Activated CD4-positive, alpha-beta memory T cell treated with anti-CD3 and anti-CD28 coated beads, Interleukin-2, amount 10 ng/mL, durations not matched to agents 7 days and 5 days (primary cell): ENCODE measurements at regions of chr1 and their contacts with region 1.

Region 1: DNA sequence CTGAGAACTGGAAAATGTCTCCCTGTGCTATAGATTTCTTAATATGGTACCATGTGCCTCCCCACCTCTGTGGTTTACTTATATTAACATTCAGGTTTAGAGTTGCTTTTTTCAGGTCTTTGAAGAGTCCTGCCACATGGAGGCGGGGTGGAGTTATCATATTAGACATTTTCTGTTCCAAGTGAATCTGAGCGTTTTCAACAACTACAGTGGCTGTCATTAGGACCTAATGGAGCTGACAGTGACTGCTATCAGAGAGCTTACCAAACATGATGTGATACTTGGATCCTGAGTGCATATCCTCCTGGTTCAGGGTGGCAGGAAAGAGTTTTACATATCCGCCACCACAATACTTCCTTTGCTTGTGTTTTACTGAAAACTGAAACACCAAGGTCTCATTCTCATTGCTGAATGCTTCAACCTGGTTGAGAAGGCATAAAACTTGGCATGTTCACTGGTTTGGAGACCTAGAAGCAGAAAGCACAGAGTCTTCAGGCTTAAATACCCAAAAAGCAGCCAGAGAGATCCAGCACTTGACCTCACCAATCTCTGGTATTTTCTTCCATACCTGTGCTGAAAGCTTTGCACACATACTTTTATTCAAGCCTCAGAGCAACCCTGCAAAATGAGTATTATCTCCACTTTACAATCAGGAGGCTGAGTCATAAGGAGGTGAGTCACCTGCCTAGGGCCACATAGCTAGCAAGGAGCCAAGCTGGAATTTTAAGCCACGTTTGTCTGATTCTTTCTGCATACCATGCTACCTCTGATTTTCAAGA is 47.4 kb upstream of the OSBPL9 start:
- DNase-seq: peak; percentile 45
- H3K4me3 Mint-ChIP-seq: peak overlapping the region; percentile 21
- H3K27ac Mint-ChIP-seq: peak overlapping the region; percentile 92
- H3K4me1 Mint-ChIP-seq: peaks cover 42% of the 10 kb centered on the region
- H3K27me3 Mint-ChIP-seq: no peaks in the 10 kb centered on the region

Region 2: GRCh38 chr1:51491166-51491981 is 78.1 kb before region 1 on chr1:
- CTCF ChIA-PET with region 1: no interaction called
- POLR2A ChIA-PET with region 1: no interaction called
- DNase-seq: no peak
- H3K4me3 Mint-ChIP-seq: no peak overlapping the region
- H3K27ac Mint-ChIP-seq: peak overlapping the region; percentile 6
- H3K4me1 Mint-ChIP-seq: peaks cover 28% of the 10 kb centered on the region
- H3K27me3 Mint-ChIP-seq: no peaks in the 10 kb centered on the region

Region 3: GRCh38 chr1:51519048-51519864 is 50.2 kb before region 1 on chr1 and contains the start of gene EPS15:
- CTCF ChIA-PET with region 1: no interaction called
- POLR2A ChIA-PET with region 1: interaction called, 14 read pairs
- DNase-seq: peak; percentile 89
- H3K4me3 Mint-ChIP-seq: peak within 1 kb of the TSS; percentile 86
- H3K27ac Mint-ChIP-seq: peak within 1 kb of the TSS; percentile 86
- H3K4me1 Mint-ChIP-seq: peaks cover 54% of the 10 kb centered on the region
- H3K27me3 Mint-ChIP-seq: no peaks in the 10 kb centered on the region
- total RNA-seq, gene EPS15: 71.8 to 75.0 TPM

Region 4: DNA sequence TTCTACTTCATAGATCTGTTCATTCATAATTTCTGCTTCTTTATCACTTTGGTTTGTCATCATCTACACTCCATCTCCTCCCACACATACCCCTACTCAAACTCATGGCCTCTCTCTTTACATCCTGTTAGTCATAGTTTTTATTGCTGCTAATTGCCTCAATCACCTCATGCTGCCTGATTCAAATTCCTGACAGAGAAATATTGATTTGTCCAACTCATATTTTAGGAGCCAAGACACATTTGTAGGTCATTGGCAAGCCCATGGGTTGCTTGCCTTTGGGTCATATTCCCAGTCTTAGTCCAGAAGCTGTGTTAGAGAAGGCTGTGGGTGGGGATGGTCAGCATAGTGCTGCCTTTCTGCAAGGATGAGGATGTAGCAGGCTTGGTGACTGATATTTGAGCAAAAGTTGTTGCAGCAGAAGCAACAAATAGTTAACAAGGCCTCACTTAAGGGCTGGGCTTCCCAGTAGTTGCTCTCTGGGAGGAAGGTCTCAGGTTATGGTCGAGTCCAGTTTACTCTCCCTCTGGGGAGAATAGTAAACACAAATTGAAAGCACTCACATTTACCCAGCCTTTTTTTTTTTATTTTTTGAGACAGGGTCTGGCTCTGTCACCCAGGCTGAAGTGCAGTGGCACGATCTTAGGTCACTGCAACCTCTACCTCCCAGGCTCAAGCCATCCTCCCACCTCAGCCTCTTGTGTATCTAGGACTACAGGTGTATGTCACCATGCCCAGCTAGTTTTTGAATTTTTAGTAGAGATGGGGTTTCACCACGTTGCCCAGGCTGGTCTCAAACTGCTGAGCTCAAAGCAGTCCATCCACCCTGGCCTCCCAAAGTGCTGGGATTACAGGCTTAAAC is 27.9 kb before region 1 on chr1:
- CTCF ChIA-PET with region 1: no interaction called
- POLR2A ChIA-PET with region 1: no interaction called
- DNase-seq: no peak
- H3K4me3 Mint-ChIP-seq: no peak overlapping the region
- H3K27ac Mint-ChIP-seq: peak overlapping the region; percentile 1
- H3K4me1 Mint-ChIP-seq: peaks cover 8% of the 10 kb centered on the region
- H3K27me3 Mint-ChIP-seq: no peaks in the 10 kb centered on the region